ENCODE measurements at regions of chr19 and their contacts with region 1.

Region 1: DNA sequence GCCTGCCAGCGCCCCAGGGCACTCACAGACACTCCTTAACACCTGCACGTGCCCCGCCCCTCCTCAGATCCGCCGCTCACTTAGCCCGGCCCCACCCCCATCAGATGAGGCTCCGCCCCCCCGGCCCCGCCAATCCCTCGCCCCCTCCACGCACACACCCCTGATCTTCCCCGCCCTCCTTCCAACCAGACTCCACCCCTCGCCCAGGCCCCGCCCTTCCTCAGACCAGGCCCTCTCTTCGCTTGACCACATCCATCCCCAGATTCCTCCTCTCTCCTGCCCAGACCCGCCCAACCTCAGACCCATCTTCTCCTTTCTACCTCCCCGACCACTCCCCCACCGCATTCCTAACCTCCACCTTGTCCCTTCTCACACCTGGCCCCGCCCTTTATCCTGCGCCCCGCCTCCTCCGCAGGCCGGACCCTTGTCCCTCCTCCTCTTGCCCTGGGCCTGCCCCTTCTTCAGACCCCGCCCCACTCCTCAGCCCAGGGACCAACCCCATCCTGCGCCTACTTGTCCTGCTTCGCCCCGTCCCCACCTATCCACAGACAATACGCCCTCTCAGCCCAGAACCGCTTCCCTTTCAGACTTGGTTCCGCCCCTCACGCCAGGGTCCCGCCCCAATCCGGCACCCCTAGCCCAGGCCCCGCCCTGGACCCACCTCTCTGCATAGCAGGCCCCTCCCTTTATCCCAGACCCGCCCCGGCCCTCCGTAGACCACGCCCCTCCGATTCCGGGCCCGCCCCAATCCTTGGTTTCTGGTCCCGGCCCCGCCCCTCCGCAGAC is 452 bp upstream of the KLHL26 start:
- DNase-seq: peak; percentile 95 to 97 (median 97)
- H3K4me3 ChIP-seq: peak overlapping the region; percentile 65 to 92 (median 90)
- H3K4me3 Mint-ChIP-seq: peak overlapping the region; percentile 85 to 90
- H3K27ac ChIP-seq: peak overlapping the region; percentile 66 to 82
- H3K27ac Mint-ChIP-seq: peak overlapping the region; percentile 76 to 99 (median 92)
- H3K4me1 ChIP-seq: peaks cover 11 to 26% of the 10 kb centered on the region in 2 donors
- H3K4me1 Mint-ChIP-seq: peaks cover 25% of the 10 kb centered on the region
- H3K27me3 ChIP-seq: peaks cover 0 to 3% of the 10 kb centered on the region in 2 donors
- H3K27me3 Mint-ChIP-seq: peaks cover 5 to 18% (median 16%) of the 10 kb centered on the region in 3 donors
- CTCF ChIP-seq: no peak

Region 2: GRCh38 chr19:18551637-18552036 is 84.7 kb before region 1 on chr19:
- intact Hi-C with region 1: no loop called
- DNase-seq: no peak
- H3K4me3 ChIP-seq: no peak overlapping the region
- H3K4me3 Mint-ChIP-seq: no peak overlapping the region
- H3K27ac ChIP-seq: no peak overlapping the region
- H3K27ac Mint-ChIP-seq: no peak overlapping the region
- H3K4me1 ChIP-seq: no peaks in the 10 kb centered on the region
- H3K4me1 Mint-ChIP-seq: no peaks in the 10 kb centered on the region
- H3K27me3 ChIP-seq: no peaks in the 10 kb centered on the region
- H3K27me3 Mint-ChIP-seq: peaks cover 4 to 9% (median 7%) of the 10 kb centered on the region in 3 donors
- CTCF ChIP-seq: no peak

Region 3: DNA sequence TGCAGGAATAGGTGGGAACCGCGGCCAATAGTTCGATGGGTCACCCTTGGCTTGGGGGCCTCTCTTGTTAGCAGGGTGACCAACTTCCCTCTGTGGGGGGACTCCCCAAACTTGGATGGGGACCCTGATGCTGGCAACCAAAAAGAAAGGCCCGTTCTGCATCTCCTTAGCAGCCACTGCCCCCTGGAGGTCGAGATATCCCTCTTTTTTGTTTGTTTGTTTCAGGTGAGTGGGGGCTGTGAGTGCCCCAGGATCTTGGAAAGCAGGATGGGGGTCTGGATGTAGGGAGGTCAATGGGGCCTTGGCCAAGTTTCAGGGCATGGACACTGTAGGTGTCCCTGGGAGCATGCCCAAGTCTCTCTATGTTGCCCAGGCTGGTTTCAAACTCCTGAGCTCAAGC is 39.4 kb after region 1 on chr19:
- intact Hi-C with region 1: loop called in 1 of 2 experiments (anchors 5 kb)
- DNase-seq: no peak
- H3K4me3 ChIP-seq: no peak overlapping the region
- H3K4me3 Mint-ChIP-seq: no peak overlapping the region
- H3K27ac ChIP-seq: no peak overlapping the region
- H3K27ac Mint-ChIP-seq: no peak overlapping the region
- H3K4me1 ChIP-seq: peaks cover 30 to 31% of the 10 kb centered on the region in 2 donors
- H3K4me1 Mint-ChIP-seq: peaks cover 25% of the 10 kb centered on the region
- H3K27me3 ChIP-seq: no peaks in the 10 kb centered on the region
- H3K27me3 Mint-ChIP-seq: peaks cover 0 to 3% (median 0%) of the 10 kb centered on the region in 3 donors
- CTCF ChIP-seq: peak; percentile 20

Region 4: DNA sequence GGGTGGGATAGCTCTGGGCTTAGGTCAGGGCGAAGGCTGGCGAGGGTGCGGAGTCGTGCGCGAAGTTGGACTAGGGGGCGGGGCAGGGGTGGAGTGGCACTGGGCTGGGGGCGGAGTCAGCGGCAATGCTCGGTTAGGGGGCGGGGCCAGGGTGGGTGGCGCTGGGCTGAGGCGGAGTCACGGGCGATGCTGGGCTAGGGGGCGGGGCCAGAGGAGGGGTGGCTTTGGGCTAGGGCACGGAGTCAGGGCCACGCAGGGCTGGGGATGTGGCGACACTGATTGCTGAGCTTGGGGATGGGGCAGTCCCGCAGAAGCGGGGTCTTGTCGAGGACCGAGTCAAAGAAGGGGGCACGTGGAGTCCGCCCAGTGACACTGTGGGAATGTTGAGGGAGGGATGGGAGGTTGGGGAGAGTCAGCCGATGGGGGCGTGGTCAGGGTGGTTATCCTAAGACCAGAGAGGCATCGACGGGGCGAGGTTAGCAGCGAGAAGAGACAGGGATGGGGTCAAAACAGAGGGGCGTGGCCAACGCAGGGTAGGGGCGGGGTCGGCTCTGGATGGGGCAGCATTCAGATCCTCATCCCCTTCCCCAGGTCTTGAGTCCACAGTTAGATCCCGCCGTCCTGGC is 296.0 kb after region 1 on chr19:
- intact Hi-C with region 1: loop called in 1 of 2 experiments (anchors 2 kb)
- DNase-seq: peak; percentile 82 to 90 (median 90)
- H3K4me3 ChIP-seq: peak overlapping the region; percentile 26 to 77 (median 31)
- H3K4me3 Mint-ChIP-seq: peak overlapping the region; percentile 85 to 94
- H3K27ac ChIP-seq: peak overlapping the region in 1 of 2 donors; percentile 59
- H3K27ac Mint-ChIP-seq: peak overlapping the region; percentile 81 to 96 (median 91)
- H3K4me1 ChIP-seq: peaks cover 11 to 15% of the 10 kb centered on the region in 2 donors
- H3K4me1 Mint-ChIP-seq: peaks cover 16% of the 10 kb centered on the region
- H3K27me3 ChIP-seq: no peaks in the 10 kb centered on the region
- H3K27me3 Mint-ChIP-seq: peaks cover 0 to 1% (median 0%) of the 10 kb centered on the region in 3 donors
- CTCF ChIP-seq: no peak